GM10248 (cell line): ENCODE measurements at regions of chr1 and their contacts with region 1.

Region 1: GRCh38 chr1:160251687-160252526 is 10.4 kb downstream of the DCAF8 start:
- DNase-seq: peak; percentile 67
- CTCF ChIP-seq: peak; percentile 71

Region 2: DNA sequence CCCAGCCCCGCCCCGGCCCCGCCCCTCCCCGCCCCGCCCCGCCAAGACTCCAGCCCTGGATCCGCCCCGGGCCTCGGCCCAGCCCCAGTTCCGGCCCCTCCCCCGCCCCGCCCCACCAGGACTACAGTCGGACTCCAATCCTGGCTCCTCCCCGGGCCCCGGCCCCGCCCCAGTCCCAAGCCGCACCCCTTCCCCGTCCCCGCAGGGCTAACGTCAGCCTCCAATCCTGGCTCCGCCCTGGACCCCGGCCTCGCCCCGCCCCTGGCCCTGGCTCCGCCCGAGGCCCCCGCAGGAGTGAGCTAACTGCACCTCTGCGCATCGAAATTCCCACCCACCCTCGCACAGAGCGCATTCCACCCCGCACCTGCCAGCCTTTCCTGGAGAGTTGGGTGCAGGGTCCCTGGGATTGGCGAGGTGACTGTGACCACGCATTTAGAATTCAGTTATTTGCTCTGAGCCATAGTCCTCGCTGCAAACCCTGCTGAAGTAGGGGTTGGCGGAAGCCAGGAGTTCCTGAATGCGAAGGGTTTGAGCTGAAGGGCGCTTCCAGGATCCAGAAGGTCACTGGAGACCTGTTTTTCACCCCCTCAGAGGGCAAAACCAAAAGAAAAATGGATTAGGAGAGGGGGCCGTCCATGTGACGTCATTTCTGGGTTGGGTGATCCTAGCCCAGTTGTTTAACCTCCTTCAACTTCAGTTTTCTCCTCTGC is 152.9 kb before region 1 on chr1:
- CTCF ChIA-PET with region 1: interaction called, 91 read pairs
- POLR2A ChIA-PET with region 1: no interaction called
- DNase-seq: peak; percentile 100
- CTCF ChIP-seq: no peak

Region 3: DNA sequence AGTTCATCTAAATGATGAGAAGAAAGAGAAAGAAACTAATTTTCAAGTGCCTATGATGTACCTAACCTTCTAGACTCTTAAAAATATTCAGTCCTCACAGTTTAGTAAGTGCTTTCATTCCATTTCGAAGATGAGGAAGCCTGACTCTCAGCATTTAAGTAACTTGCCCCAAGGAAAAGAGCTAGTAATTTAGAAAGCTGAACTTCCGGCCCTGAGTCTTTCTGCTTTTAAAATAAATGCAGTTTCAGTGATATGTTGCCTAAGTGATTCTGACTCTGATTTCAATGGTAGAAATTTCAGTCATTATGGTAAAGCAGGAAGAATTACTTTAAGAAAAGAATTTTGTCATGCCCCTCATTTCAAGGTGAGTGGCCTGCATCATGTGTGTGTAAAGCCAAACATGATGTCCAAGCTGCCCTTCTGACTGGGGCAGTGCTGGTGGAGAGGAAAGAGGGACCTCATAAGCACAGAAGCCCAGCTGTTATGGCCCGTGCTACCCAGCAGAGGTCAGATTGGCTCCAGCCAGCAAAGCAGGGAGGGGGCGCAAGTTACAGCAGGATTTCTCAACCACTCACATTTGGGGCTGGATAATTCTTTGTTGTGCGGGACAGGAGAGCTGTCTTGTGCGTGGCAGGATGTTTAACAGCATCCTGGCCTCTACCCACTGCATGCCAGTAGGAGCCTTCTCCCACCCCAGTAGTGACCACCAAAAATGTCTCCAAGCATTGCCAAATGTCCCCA is 89.8 kb before region 1 on chr1:
- CTCF ChIA-PET with region 1: interaction called, 16 read pairs
- POLR2A ChIA-PET with region 1: no interaction called
- DNase-seq: peak; percentile 41
- CTCF ChIP-seq: peak; percentile 46

Region 4: DNA sequence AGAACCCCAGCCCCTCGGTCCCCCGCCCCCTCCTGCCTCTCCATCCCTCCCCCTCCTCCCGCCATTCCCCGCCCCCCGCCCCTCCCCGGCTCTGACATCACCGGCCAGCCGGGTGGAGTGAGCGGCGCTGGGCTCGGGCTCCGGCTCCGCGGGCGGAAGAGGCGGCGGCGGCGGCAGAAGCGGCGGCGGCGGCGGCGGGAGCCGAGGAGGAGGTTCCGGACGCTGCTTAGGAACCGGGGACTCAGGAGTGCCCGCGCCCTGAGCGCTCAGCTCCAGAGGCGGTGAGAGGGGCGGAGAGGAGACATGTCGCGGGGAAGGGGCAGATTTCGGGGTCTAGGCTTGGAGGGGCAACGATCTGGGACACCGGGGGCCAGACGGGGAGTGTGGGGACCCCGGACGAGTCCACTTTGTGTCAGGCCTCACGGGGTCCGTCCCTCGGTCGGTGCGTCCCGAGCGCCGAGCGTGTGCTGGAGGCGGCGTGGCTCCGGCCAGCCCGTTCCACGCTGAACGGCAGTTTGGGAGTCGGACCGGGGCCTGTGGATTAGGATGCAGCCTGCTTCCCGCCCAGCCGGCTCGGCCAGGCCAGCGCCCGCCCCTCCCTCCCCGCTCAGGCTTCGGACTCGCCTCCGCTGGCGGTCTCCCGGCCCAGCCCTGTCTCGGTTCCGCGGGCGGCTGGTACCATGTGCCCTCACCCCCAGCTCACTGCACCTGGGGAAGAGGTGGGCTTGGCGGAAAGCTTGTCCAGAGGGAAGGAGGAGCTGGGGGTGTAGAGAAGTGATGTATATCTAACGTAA is 46.5 kb before region 1 on chr1 and contains the start of gene PEA15:
- CTCF ChIA-PET with region 1: interaction called, 21 read pairs
- POLR2A ChIA-PET with region 1: no interaction called
- DNase-seq: peak; percentile 89
- CTCF ChIP-seq: no peak

Region 5: DNA sequence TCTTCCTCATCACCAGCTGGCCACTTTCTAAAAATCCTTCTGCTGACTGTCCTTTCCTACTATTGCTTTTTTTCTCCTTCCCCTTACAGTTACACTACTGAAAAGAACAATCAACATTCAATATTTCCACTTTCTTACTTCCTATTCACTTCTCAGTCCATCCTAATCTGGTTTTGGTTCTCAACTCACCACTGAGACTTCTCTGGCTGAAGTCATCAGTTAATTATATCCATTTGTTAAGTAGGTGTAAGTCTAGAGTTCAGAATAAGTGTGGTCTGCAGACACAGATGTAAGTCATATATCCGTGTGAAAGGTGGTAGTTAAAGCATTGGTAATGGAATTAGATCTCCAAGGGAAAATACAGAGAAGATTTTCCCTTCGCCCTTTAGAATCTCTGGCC is 25.3 kb before region 1 on chr1:
- CTCF ChIA-PET with region 1: interaction called, 45 read pairs
- POLR2A ChIA-PET with region 1: interaction called, 3 read pairs
- DNase-seq: peak; percentile 52
- CTCF ChIP-seq: no peak

Region 6: DNA sequence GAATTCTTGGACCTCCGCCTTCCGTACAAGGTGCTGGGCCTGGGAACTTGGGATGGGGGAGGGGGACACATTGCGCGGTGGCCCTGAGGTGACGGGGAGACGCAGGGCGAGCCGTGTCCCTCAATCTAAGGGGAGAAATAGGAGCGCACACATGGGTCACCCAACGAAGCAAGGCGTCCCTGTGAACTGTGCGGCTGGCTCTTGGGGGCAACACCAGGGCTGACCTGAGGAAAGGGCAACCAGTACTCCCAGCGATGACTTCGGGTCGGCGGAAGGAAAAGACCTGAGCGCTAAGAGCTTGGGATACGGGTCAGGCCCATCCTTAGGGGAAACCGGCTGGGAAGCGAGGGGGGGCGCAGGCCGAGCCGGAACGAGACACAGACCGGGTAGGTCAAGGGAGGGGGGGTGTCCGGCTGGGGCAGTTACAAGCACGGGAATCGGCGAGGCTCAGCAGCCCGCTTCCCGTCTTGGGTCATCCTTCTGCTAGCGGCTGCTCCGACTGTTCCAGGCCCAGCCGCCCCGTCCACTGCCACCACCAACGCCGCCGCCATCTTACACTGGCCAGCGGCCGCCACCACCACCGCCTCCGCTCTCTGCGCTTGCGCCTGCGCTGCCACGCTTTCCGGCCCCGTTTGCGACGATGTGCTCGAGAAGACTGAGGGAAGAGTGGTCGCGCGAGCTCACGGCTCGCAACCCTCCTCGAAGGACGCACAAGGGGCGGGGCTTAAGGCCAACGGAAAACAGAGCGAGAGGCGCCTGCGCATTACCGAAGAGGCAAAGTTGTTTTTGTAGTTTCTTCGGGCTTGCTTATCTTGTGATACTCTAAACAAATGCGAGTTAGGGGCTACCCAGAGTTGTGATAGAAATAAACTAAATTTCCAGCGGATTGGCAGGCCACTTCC is 10.2 kb after region 1 on chr1 and contains the start of gene DCAF8:
- CTCF ChIA-PET with region 1: interaction called, 37 read pairs
- POLR2A ChIA-PET with region 1: interaction called, 8 read pairs
- DNase-seq: peak; percentile 95
- CTCF ChIP-seq: no peak

Region 7: GRCh38 chr1:160376525-160377131 is 124.7 kb after region 1 on chr1:
- CTCF ChIA-PET with region 1: interaction called, 16 read pairs
- POLR2A ChIA-PET with region 1: no interaction called
- DNase-seq: peak; percentile 73
- CTCF ChIP-seq: peak; percentile 91